RWPE1 (cell line): ENCODE measurements at regions of chr7 and their contacts with region 1.

Region 1: DNA sequence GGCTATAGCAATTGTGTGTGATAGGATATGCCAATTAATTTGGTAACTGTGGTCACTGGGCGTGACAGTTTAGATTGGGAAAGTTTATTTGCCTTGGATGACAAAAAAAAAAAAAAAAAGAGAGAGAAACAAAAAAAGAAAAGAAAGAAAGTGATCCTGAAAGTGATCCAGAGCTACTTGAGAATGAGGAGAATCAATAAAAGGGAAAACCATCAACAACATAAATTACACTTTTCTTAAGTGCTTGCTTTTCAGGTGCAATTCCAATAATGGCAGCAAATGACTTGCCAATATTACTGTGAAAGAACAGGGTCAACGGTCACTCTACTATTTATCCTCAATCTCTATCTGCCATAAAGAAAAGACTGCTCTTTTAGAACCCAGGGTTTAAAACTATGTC is 191.8 kb upstream of the SEMA3C start:
- DNase-seq: no peak
- H3K27ac ChIP-seq: no peak overlapping the region
- CTCF ChIP-seq: no peak

Region 2: DNA sequence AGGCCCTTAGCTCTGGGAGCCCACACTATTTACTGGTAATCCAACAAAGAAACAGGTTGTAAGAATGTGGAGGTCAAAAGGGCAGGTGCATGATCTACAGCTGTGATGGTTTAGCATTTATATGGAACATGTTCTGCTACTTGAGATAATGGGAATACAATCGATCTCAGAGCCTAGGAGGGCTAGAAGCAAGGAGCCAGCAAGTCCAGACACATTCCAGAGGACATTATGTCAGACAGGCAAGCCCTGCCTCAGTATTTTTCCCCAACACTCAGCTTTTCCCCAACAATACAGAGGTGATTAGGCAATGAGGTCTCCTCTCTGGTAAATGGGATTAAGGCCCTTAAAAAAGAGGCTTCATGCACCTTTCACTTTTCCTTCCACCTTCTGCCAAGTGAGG is 577.4 kb before region 1 on chr7:
- CTCF ChIA-PET with region 1: no interaction called
- POLR2A ChIA-PET with region 1: no interaction called
- DNase-seq: no peak
- H3K27ac ChIP-seq: no peak overlapping the region
- CTCF ChIP-seq: no peak

Region 3: DNA sequence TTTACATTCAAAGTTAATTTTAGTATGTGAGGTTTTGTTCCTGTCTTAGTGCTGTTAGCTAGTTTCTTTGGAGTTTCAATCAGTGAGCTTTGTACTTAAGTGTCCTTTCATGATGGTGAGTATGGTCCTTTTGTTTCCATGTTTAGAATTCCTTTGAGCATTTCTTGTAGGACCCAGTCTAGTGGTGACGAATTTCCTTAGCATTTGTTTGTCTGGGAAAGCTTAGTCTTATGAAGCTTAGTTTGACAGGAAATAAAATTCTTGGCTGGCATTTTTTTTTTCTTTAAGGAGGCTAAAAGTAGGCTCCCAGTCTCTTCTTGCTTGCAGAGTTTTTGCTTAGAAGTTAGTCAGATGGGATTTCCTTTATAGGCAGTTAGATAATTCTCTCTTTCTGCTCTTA is 17.3 kb after region 1 on chr7:
- CTCF ChIA-PET with region 1: interaction called, 14 read pairs
- POLR2A ChIA-PET with region 1: interaction called, 3 read pairs
- DNase-seq: no peak
- H3K27ac ChIP-seq: no peak overlapping the region
- CTCF ChIP-seq: no peak

Region 4: DNA sequence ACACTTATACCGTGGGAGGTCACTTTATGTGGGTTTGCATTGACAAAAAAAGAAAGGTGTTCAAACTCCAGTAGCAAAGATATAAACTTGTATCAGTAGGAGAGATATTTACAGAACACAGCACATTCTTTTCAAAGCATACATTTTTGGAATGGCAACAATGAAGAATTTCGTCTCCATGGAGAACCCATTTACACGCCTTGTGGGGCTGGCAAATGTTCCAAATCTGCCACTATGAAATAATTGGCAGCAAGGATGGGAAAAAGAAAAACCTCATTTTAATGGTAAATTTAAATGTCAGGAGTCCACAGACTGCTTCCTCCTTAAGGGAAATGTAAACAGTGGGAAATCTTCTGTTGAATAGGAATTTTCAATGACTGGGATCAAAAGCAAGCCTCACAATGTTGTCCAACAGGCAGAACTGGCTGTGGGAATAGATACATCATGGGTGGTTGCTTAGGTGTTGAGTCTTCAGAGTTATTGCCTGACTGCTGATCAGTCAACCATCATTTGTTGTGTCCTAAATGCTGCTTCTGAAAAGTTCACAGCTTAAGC is 64.7 kb after region 1 on chr7:
- CTCF ChIA-PET with region 1: no interaction called
- POLR2A ChIA-PET with region 1: no interaction called
- DNase-seq: no peak
- H3K27ac ChIP-seq: no peak overlapping the region
- CTCF ChIP-seq: no peak

Region 5: GRCh38 chr7:81499262-81500116 is 388.8 kb after region 1 on chr7:
- CTCF ChIA-PET with region 1: no interaction called
- POLR2A ChIA-PET with region 1: no interaction called
- DNase-seq: peak; percentile 42
- H3K27ac ChIP-seq: peak overlapping the region; percentile 48
- CTCF ChIP-seq: peak; percentile 75